PC-9 (cell line): ENCODE measurements at regions of chr19 and their contacts with region 1.

Region 1: GRCh38 chr19:51570962-51571575 is at the start of gene ZNF175:
- DNase-seq: peak; percentile 85 to 95
- H3K4me3 ChIP-seq: peak within 1 kb of the TSS; percentile 74
- H3K27ac ChIP-seq: no peak within 1 kb of the TSS
- H3K4me1 ChIP-seq: peaks cover 12% of the 10 kb centered on the region
- H3K27me3 ChIP-seq: peaks cover 25% of the 10 kb centered on the region
- CTCF ChIP-seq: no peak
- total RNA-seq, gene ZNF175: 11.7 and 12.5 TPM in 2 replicates

Region 2: GRCh38 chr19:51514866-51515481 is 56.1 kb before region 1 on chr19:
- CTCF ChIA-PET with region 1: interaction called, 11 read pairs
- POLR2A ChIA-PET with region 1: no interaction called
- intact Hi-C with region 1: no loop called
- DNase-seq: no peak
- H3K4me3 ChIP-seq: no peak overlapping the region
- H3K27ac ChIP-seq: no peak overlapping the region
- H3K4me1 ChIP-seq: no peaks in the 10 kb centered on the region
- H3K27me3 ChIP-seq: peaks cover 28% of the 10 kb centered on the region; the same call in 1 of the 2 replicates
- CTCF ChIP-seq: peak; percentile 89

Region 3: GRCh38 chr19:51593969-51594773 is 23.1 kb after region 1 on chr19:
- CTCF ChIA-PET with region 1: interaction called, 22 read pairs
- POLR2A ChIA-PET with region 1: no interaction called
- intact Hi-C with region 1: loop called (anchors 1 kb)
- DNase-seq: peak; percentile 93 to 99
- H3K4me3 ChIP-seq: peak overlapping the region; percentile 70
- H3K27ac ChIP-seq: no peak overlapping the region
- H3K4me1 ChIP-seq: peaks cover 5% of the 10 kb centered on the region; the same call in 1 of the 2 replicates
- H3K27me3 ChIP-seq: 0 out of 2 replicates have a peak, but pooled peaks cover 10% of the 10 kb centered on the region
- CTCF ChIP-seq: no peak

Region 4: GRCh38 chr19:51607077-51607476 is 36.0 kb after region 1 on chr19:
- CTCF ChIA-PET with region 1: no interaction called
- POLR2A ChIA-PET with region 1: no interaction called
- intact Hi-C with region 1: no loop called
- DNase-seq: no peak
- H3K4me3 ChIP-seq: no peak overlapping the region
- H3K27ac ChIP-seq: no peak overlapping the region
- H3K4me1 ChIP-seq: no peaks in the 10 kb centered on the region
- H3K27me3 ChIP-seq: peaks cover 47% of the 10 kb centered on the region
- CTCF ChIP-seq: no peak

Region 5: GRCh38 chr19:51703575-51704515 is 132.8 kb after region 1 on chr19:
- CTCF ChIA-PET with region 1: no interaction called
- POLR2A ChIA-PET with region 1: interaction called, 10 read pairs
- intact Hi-C with region 1: no loop called
- DNase-seq: peak; percentile 83 to 97
- H3K4me3 ChIP-seq: peak overlapping the region; percentile 70
- H3K27ac ChIP-seq: peak overlapping the region; percentile 26; the same call in 1 of the 2 replicates
- H3K4me1 ChIP-seq: peaks cover 8% of the 10 kb centered on the region; the same call in 1 of the 2 replicates
- H3K27me3 ChIP-seq: no peaks in the 10 kb centered on the region
- CTCF ChIP-seq: peak; percentile 62

Region 6: DNA sequence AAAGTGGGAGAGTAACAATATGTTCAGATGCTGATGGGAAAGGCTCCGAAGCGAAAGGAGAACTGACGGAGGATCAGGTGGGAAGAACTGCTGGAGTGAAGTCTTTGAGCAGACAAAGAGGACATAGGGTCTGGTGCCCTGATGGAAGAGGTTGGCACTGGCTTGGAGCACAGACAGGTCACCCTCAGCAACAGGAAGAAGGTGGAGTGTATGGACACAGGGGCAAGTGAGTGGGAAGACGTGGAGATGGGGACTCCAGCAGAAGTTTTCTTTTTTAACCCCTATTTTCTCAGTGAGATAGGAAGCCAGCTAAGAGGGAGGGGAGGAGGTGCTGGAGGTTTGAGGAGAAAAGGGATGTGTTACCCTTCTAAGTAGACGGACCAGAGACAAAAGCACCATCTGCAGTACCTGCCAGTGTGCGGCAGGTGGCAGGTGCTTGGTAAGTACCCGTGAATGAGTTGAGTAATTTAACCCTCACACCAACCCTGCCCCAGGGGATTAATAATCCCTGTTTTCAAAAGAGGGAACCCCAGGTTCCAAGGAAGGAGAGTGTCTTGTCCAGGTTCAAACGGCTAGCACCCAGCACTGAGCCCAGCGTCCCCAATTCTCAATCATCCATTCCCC is 141.5 kb after region 1 on chr19:
- CTCF ChIA-PET with region 1: no interaction called
- POLR2A ChIA-PET with region 1: interaction called, 11 read pairs
- intact Hi-C with region 1: no loop called
- DNase-seq: peak; percentile 38 to 64
- H3K4me3 ChIP-seq: no peak overlapping the region
- H3K27ac ChIP-seq: no peak overlapping the region
- H3K4me1 ChIP-seq: no peaks in the 10 kb centered on the region
- H3K27me3 ChIP-seq: peaks cover 41% of the 10 kb centered on the region
- CTCF ChIP-seq: peak; percentile 82

Region 7: GRCh38 chr19:51742789-51743188 is 171.7 kb after region 1 on chr19:
- CTCF ChIA-PET with region 1: interaction called, 12 read pairs
- POLR2A ChIA-PET with region 1: no interaction called
- intact Hi-C with region 1: no loop called
- DNase-seq: no peak
- H3K4me3 ChIP-seq: no peak overlapping the region
- H3K27ac ChIP-seq: no peak overlapping the region
- H3K4me1 ChIP-seq: no peaks in the 10 kb centered on the region
- H3K27me3 ChIP-seq: peaks cover 87% of the 10 kb centered on the region
- CTCF ChIP-seq: no peak